ENCODE measurements at regions of chr12 and their contacts with region 1.

Region 1: GRCh38 chr12:12736759-12737676 is 19.9 kb downstream of the CDKN1B start:
- DNase-seq: no peak
- ATAC-seq: peak; percentile 89
- H3K4me3 Mint-ChIP-seq: no peak overlapping the region
- H3K27ac Mint-ChIP-seq: peak overlapping the region; percentile 1; the same call in 1 of the 2 replicates
- H3K4me1 Mint-ChIP-seq: peaks cover 15% of the 10 kb centered on the region
- H3K27me3 Mint-ChIP-seq: no peaks in the 10 kb centered on the region
- CTCF ChIP-seq: peak; percentile 32; the same call in 1 of the 2 replicates

Region 2: DNA sequence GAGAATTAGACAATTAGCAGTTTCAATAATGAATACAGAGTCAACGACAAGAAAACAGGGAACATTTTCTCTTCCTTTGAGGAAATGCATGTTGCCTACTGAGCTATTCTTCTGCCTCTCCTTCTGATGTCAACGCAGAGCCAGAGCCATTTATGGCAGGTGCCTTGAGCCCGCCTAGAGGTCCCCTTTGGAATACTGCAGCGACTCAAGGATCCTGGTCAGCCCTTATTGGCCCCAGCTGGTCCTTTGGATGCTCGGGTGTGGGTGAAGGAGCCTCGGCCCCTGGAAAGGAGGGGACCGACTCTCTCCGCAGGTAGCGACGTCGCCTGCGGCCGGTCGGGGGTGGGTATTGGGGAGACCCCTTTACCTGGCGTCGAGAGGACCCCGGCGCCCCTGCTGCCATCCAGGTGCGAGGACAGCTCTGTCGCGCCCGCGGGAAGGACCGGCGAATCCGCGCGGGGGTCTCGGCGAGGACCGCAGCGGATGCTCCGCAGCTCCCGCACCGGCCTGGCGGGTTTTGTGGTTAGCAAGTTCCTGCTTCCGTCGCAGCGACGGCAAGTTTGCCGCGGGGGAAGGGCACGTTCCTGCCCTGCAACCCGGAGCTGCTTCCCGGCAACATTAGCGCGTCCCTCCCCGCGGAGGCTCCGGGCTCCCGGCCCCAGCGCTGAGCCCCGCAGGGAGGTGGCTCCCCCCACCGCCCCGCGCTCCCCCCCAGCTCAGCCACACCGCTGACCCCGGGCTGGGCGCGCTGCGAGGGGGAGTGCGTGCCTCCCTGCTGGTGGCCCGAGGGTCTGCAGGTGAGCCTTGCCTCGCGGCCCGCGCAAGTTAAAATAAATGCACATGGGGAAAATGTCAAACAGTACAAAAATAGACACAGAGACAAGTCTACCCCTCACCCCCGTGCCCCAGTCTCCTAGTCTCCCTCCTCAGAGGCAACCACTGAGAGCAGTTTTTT is 387.0 kb before region 1 on chr12 and contains the start of gene MANSC1:
- CTCF ChIA-PET with region 1: interaction called, 10 read pairs
- POLR2A ChIA-PET with region 1: interaction called, 3 read pairs
- DNase-seq: peak; percentile 71
- ATAC-seq: peak; percentile 92
- H3K4me3 Mint-ChIP-seq: peak within 1 kb of the TSS; percentile 70
- H3K27ac Mint-ChIP-seq: no peak within 1 kb of the TSS
- H3K4me1 Mint-ChIP-seq: peaks cover 24% of the 10 kb centered on the region
- H3K27me3 Mint-ChIP-seq: peaks cover 11% of the 10 kb centered on the region
- CTCF ChIP-seq: 0 out of 2 replicates have a peak, but pooled peaks have one; percentile 25
- total RNA-seq, gene MANSC1: 6.8 to 10.7 TPM (median 10.6 TPM) in 3 replicates

Region 3: DNA sequence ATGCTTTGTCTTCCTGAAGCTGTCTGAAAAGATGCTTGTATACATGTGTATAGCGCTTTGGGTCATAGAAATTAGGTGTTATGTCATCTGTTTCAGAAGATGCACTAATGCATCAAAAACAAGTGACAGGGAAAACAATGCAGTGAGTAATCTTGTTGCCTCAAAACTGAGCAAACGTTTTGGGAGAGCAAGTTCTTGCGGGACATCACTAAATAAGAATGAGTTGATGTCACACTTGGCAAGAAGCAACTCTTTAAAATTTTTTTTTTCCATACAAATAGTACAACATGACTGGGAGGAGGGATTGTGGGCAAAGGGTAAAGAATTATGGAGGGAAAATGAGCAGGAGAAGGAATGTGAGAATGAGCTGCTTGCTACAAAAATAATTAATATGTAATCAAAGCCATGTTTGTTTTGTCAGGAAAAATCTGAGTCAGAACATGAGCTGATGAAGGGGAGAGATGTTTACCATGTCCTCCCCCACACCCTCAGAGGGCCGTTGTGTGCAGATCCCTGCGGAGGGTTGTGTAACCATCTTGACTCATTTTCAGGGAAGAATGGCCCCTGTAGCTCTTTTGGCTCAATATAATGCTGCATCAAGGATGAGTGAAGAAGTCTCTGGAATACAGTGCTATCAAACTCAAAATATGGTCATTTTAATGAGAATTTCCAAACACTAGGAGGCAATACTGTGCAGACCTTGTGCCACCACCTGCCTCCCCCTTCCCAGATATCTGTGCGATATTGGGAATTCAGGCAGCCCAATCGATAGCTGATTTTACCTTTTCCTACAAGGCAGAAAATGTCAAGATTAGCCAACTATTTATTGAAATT is 338.8 kb before region 1 on chr12:
- CTCF ChIA-PET with region 1: interaction called, 10 read pairs
- POLR2A ChIA-PET with region 1: no interaction called
- DNase-seq: no peak
- ATAC-seq: peak; percentile 20; the same call in 1 of the 2 replicates
- H3K4me3 Mint-ChIP-seq: no peak overlapping the region
- H3K27ac Mint-ChIP-seq: 0 out of 2 replicates have a peak overlapping the region, but pooled peaks have one; percentile 92
- H3K4me1 Mint-ChIP-seq: peaks cover 33% of the 10 kb centered on the region
- H3K27me3 Mint-ChIP-seq: no peaks in the 10 kb centered on the region
- CTCF ChIP-seq: no peak

Region 4: GRCh38 chr12:12701457-12701856 is 35.6 kb before region 1 on chr12:
- CTCF ChIA-PET with region 1: interaction called, 10 read pairs
- POLR2A ChIA-PET with region 1: interaction called, 6 read pairs
- DNase-seq: peak; percentile 53
- ATAC-seq: no peak; the same call in 1 of the 2 replicates
- H3K4me3 Mint-ChIP-seq: no peak overlapping the region
- H3K27ac Mint-ChIP-seq: no peak overlapping the region
- H3K4me1 Mint-ChIP-seq: peaks cover 22% of the 10 kb centered on the region
- H3K27me3 Mint-ChIP-seq: peaks cover 3% of the 10 kb centered on the region; the same call in 1 of the 2 replicates
- CTCF ChIP-seq: no peak

Region 5: DNA sequence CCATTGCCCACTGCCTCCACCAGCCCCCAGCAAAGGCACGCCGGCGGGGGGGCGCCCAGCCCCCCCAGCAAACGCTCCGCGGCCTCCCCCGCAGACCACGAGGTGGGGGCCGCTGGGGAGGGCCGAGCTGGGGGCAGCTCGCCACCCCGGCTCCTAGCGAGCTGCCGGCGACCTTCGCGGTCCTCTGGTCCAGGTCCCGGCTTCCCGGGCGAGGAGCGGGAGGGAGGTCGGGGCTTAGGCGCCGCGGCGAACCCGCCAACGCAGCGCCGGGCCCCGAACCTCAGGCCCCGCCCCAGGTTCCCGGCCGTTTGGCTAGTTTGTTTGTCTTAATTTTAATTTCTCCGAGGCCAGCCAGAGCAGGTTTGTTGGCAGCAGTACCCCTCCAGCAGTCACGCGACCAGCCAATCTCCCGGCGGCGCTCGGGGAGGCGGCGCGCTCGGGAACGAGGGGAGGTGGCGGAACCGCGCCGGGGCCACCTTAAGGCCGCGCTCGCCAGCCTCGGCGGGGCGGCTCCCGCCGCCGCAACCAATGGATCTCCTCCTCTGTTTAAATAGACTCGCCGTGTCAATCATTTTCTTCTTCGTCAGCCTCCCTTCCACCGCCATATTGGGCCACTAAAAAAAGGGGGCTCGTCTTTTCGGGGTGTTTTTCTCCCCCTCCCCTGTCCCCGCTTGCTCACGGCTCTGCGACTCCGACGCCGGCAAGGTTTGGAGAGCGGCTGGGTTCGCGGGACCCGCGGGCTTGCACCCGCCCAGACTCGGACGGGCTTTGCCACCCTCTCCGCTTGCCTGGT is 20.0 kb before region 1 on chr12 and contains the start of gene CDKN1B:
- CTCF ChIA-PET with region 1: interaction called, 46 read pairs
- POLR2A ChIA-PET with region 1: no interaction called
- DNase-seq: peak; percentile 80
- ATAC-seq: peak; percentile 77
- H3K4me3 Mint-ChIP-seq: peak within 1 kb of the TSS; percentile 98
- H3K27ac Mint-ChIP-seq: peak within 1 kb of the TSS; percentile 75
- H3K4me1 Mint-ChIP-seq: peaks cover 58% of the 10 kb centered on the region
- H3K27me3 Mint-ChIP-seq: peaks cover 13% of the 10 kb centered on the region; the same call in 1 of the 2 replicates
- CTCF ChIP-seq: no peak
- total RNA-seq, gene CDKN1B: 34.2 to 38.4 TPM (median 34.8 TPM) in 3 replicates

Region 6: DNA sequence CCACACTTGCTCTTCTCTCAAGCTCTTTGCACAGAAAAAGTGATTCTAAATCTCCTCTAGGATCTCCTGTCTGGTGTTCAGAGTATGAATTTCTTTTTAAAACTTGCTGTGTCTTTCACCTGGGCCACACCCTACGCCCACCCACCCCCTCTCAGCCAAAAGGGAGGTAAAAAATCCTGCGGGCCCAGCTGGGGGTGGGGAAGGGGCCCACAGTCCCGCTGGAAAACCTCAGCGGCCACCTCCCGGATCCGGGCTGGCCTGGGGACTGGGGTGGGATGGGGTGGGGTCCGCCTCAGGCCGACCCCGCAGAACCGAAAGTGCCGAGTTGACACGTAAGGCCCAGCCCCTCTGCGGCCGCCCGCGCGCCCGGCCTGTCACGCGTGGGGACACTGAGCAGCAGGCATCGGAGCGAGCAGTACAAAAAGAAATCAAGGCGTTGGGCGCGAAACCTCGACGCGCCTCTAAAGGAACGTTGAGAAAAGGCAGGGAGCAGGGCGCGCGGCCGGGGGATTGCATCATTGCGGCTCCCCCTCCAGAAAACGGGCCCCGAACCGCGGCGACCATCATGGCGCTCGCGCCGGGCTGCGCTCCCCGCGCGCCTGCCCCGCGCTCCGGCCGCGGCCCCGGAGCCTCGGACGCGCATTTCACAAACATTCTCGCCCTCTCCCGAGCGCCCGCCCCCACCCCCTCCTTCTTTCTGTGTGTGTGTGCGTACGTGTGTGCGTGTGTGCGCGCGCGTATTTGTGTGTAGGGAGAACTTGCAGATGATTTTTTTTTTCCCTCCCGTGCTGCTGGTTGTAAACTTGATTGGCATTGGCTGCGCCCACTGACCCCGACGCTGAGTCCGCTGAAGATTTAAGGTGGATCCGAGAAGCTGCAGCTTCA is 12.1 kb before region 1 on chr12:
- CTCF ChIA-PET with region 1: interaction called, 43 read pairs
- POLR2A ChIA-PET with region 1: interaction called, 6 read pairs
- DNase-seq: peak; percentile 79
- ATAC-seq: peak; percentile 66
- H3K4me3 Mint-ChIP-seq: peak overlapping the region; percentile 81
- H3K27ac Mint-ChIP-seq: peak overlapping the region; percentile 99
- H3K4me1 Mint-ChIP-seq: peaks cover 30% of the 10 kb centered on the region
- H3K27me3 Mint-ChIP-seq: peaks cover 17% of the 10 kb centered on the region
- CTCF ChIP-seq: no peak

Region 7: GRCh38 chr12:12786716-12787601 is 49.9 kb after region 1 on chr12:
- CTCF ChIA-PET with region 1: interaction called, 16 read pairs
- POLR2A ChIA-PET with region 1: no interaction called
- DNase-seq: peak; percentile 71
- ATAC-seq: peak; percentile 80
- H3K4me3 Mint-ChIP-seq: peak overlapping the region; percentile 66
- H3K27ac Mint-ChIP-seq: no peak overlapping the region
- H3K4me1 Mint-ChIP-seq: peaks cover 44% of the 10 kb centered on the region
- H3K27me3 Mint-ChIP-seq: peaks cover 42% of the 10 kb centered on the region
- CTCF ChIP-seq: no peak

Region 8: GRCh38 chr12:13223179-13223859 is 486.3 kb after region 1 on chr12:
- CTCF ChIA-PET with region 1: no interaction called
- POLR2A ChIA-PET with region 1: no interaction called
- DNase-seq: no peak
- ATAC-seq: no peak
- H3K4me3 Mint-ChIP-seq: no peak overlapping the region
- H3K27ac Mint-ChIP-seq: no peak overlapping the region
- H3K4me1 Mint-ChIP-seq: no peaks in the 10 kb centered on the region
- H3K27me3 Mint-ChIP-seq: no peaks in the 10 kb centered on the region; the same call in 1 of the 2 replicates
- CTCF ChIP-seq: no peak